ENCODE measurements at regions of chr18 and their contacts with region 1.

Region 1: GRCh38 chr18:48868468-48869466 is 82.0 kb downstream of the SMAD7 start:
- DNase-seq: peak; percentile 96
- ATAC-seq: peak; percentile 92
- H3K4me3 ChIP-seq: 0 out of 2 replicates have a peak overlapping the region, but pooled peaks have one; percentile 20
- H3K27ac ChIP-seq: peak overlapping the region; percentile 97
- H3K4me1 ChIP-seq: peaks cover 29% of the 10 kb centered on the region
- H3K27me3 ChIP-seq: no peaks in the 10 kb centered on the region
- CTCF ChIP-seq: no peak
- EP300 ChIP-seq: peak; percentile 84 to 93
- POLR2A ChIP-seq: peak; percentile 73
- RAD21 ChIP-seq: peak; percentile 28; the same call in 1 of the 2 replicates

Region 2: GRCh38 chr18:48649231-48649630 is 219.5 kb before region 1 on chr18:
- CTCF ChIA-PET with region 1: no interaction called
- POLR2A ChIA-PET with region 1: no interaction called
- RAD21 ChIA-PET with region 1: no interaction called
- SMC1A ChIA-PET with region 1: no interaction called
- in situ Hi-C with region 1: no loop called
- intact Hi-C with region 1: no loop called
- DNase-seq: no peak
- ATAC-seq: no peak
- H3K4me3 ChIP-seq: no peak overlapping the region
- H3K27ac ChIP-seq: no peak overlapping the region
- H3K4me1 ChIP-seq: no peaks in the 10 kb centered on the region
- H3K27me3 ChIP-seq: no peaks in the 10 kb centered on the region
- CTCF ChIP-seq: no peak
- EP300 ChIP-seq: no peak
- POLR2A ChIP-seq: no peak
- RAD21 ChIP-seq: no peak

Region 3: GRCh38 chr18:48800876-48801727 is 67.7 kb before region 1 on chr18:
- CTCF ChIA-PET with region 1: interaction called, 6 read pairs
- POLR2A ChIA-PET with region 1: no interaction called
- RAD21 ChIA-PET with region 1: interaction called, 16 read pairs
- SMC1A ChIA-PET with region 1: interaction called, 14 read pairs
- in situ Hi-C with region 1: no loop called
- intact Hi-C with region 1: no loop called
- DNase-seq: peak; percentile 89
- ATAC-seq: peak; percentile 87
- H3K4me3 ChIP-seq: peak overlapping the region; percentile 36; the same call in 1 of the 2 replicates
- H3K27ac ChIP-seq: peak overlapping the region; percentile 92
- H3K4me1 ChIP-seq: peaks cover 52% of the 10 kb centered on the region
- H3K27me3 ChIP-seq: no peaks in the 10 kb centered on the region
- CTCF ChIP-seq: no peak
- EP300 ChIP-seq: peak; percentile 87 to 93
- POLR2A ChIP-seq: peak; percentile 60; the same call in 1 of the 2 replicates
- RAD21 ChIP-seq: no peak

Region 4: GRCh38 chr18:48820483-48821250 is 48.1 kb before region 1 on chr18:
- CTCF ChIA-PET with region 1: interaction called, 6 read pairs
- POLR2A ChIA-PET with region 1: interaction called, 3 read pairs
- RAD21 ChIA-PET with region 1: interaction called, 30 read pairs
- SMC1A ChIA-PET with region 1: interaction called, 18 read pairs
- in situ Hi-C with region 1: no loop called
- intact Hi-C with region 1: loop called (anchors 2 kb)
- DNase-seq: peak; percentile 93
- ATAC-seq: peak; percentile 95
- H3K4me3 ChIP-seq: no peak overlapping the region
- H3K27ac ChIP-seq: peak overlapping the region; percentile 60
- H3K4me1 ChIP-seq: peaks cover 20% of the 10 kb centered on the region
- H3K27me3 ChIP-seq: no peaks in the 10 kb centered on the region
- CTCF ChIP-seq: no peak
- EP300 ChIP-seq: peak; percentile 51 to 83
- POLR2A ChIP-seq: no peak
- RAD21 ChIP-seq: peak; percentile 9; the same call in 1 of the 2 replicates

Region 5: GRCh38 chr18:48934723-48935432 is 66.1 kb after region 1 on chr18:
- CTCF ChIA-PET with region 1: no interaction called
- POLR2A ChIA-PET with region 1: interaction called, 4 read pairs
- RAD21 ChIA-PET with region 1: interaction called, 11 read pairs
- SMC1A ChIA-PET with region 1: interaction called, 21 read pairs
- in situ Hi-C with region 1: no loop called
- intact Hi-C with region 1: loop called (anchors 5 kb)
- DNase-seq: peak; percentile 71
- ATAC-seq: peak; percentile 71
- H3K4me3 ChIP-seq: peak overlapping the region; percentile 57
- H3K27ac ChIP-seq: peak overlapping the region; percentile 96
- H3K4me1 ChIP-seq: peaks cover 68% of the 10 kb centered on the region
- H3K27me3 ChIP-seq: no peaks in the 10 kb centered on the region
- CTCF ChIP-seq: no peak
- EP300 ChIP-seq: no peak; a peak in 1 of 4 replicates
- POLR2A ChIP-seq: peak; percentile 62; the same call in 1 of the 2 replicates
- RAD21 ChIP-seq: no peak